Activated naive CD4-positive, alpha-beta T cell treated with anti-CD3 and anti-CD28 coated beads, Interleukin-2, amount 10 ng/mL, durations not matched to agents 7 days and 5 days (primary cell): ENCODE measurements at regions of chr12 and their contacts with region 1.

Region 1: GRCh38 chr12:121773011-121773777 is 20.3 kb downstream of the RHOF start:
- DNase-seq: peak; percentile 90
- H3K4me3 Mint-ChIP-seq: no peak overlapping the region
- H3K27ac Mint-ChIP-seq: peak overlapping the region; percentile 11
- H3K4me1 Mint-ChIP-seq: peaks cover 25% of the 10 kb centered on the region
- H3K27me3 Mint-ChIP-seq: no peaks in the 10 kb centered on the region

Region 2: DNA sequence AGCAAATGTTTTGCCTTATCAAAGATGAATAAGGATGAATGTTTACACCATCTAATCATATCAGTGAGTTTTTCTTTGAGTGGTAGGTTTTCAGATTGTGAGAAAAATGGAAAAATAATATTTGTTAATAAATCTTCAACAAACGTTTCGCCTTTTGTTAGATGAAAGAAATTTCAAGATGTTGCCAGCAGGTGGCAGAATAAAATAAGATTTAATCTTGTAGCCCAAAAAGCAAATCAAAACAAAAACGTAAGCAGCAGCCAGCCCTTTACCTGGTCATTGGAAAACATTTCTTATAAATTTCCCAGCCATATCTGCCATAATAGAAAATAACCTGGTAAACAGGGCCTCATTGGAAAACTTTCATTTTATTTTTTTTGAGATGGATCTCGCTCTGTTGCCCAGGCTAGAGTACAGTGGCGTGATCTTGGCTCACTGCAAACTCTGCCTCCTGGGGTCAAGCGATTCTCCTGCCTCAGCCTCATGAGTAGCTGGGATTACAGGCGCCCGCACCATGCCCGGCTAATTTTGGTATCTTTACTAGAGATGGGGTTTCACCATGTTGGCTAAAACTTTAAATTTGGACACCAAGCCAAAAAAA is 76.0 kb before region 1 on chr12:
- CTCF ChIA-PET with region 1: interaction called, 19 read pairs
- DNase-seq: peak; percentile 37
- H3K4me3 Mint-ChIP-seq: no peak overlapping the region
- H3K27ac Mint-ChIP-seq: no peak overlapping the region
- H3K4me1 Mint-ChIP-seq: peaks cover 2% of the 10 kb centered on the region
- H3K27me3 Mint-ChIP-seq: peaks cover 19% of the 10 kb centered on the region

Region 3: GRCh38 chr12:121712461-121713256 is 60.5 kb before region 1 on chr12 and contains the start of gene TMEM120B:
- CTCF ChIA-PET with region 1: interaction called, 18 read pairs
- DNase-seq: peak; percentile 87
- H3K4me3 Mint-ChIP-seq: peak within 1 kb of the TSS; percentile 85
- H3K27ac Mint-ChIP-seq: peak within 1 kb of the TSS; percentile 93
- H3K4me1 Mint-ChIP-seq: peaks cover 37% of the 10 kb centered on the region
- H3K27me3 Mint-ChIP-seq: peaks cover 10% of the 10 kb centered on the region

Region 4: GRCh38 chr12:121786441-121786825 is 13.2 kb after region 1 on chr12:
- CTCF ChIA-PET with region 1: interaction called, 300 read pairs
- DNase-seq: peak; percentile 57
- H3K4me3 Mint-ChIP-seq: peak overlapping the region; percentile 92
- H3K27ac Mint-ChIP-seq: peak overlapping the region; percentile 99
- H3K4me1 Mint-ChIP-seq: peaks cover 92% of the 10 kb centered on the region
- H3K27me3 Mint-ChIP-seq: no peaks in the 10 kb centered on the region

Region 5: GRCh38 chr12:121811434-121812319 is 38.5 kb after region 1 on chr12:
- CTCF ChIA-PET with region 1: interaction called, 17 read pairs
- DNase-seq: peak; percentile 74
- H3K4me3 Mint-ChIP-seq: peak overlapping the region; percentile 74
- H3K27ac Mint-ChIP-seq: peak overlapping the region; percentile 87
- H3K4me1 Mint-ChIP-seq: peaks cover 63% of the 10 kb centered on the region
- H3K27me3 Mint-ChIP-seq: no peaks in the 10 kb centered on the region